ENCODE measurements at regions of chr1 and their contacts with region 1.

Region 1: GRCh38 chr1:48524892-48525467 is 53.0 kb upstream of the SPATA6 start:
- DNase-seq: no peak
- H3K4me3 ChIP-seq: no peak overlapping the region
- H3K27ac ChIP-seq: no peak overlapping the region
- H3K4me1 ChIP-seq: peaks cover 0 to 19% (median 5%) of the 10 kb centered on the region in 4 donors
- H3K27me3 ChIP-seq: no peaks in the 10 kb centered on the region
- CTCF ChIP-seq: no peak
- EP300 ChIP-seq: no peak
- POLR2A ChIP-seq: no peak

Region 2: DNA sequence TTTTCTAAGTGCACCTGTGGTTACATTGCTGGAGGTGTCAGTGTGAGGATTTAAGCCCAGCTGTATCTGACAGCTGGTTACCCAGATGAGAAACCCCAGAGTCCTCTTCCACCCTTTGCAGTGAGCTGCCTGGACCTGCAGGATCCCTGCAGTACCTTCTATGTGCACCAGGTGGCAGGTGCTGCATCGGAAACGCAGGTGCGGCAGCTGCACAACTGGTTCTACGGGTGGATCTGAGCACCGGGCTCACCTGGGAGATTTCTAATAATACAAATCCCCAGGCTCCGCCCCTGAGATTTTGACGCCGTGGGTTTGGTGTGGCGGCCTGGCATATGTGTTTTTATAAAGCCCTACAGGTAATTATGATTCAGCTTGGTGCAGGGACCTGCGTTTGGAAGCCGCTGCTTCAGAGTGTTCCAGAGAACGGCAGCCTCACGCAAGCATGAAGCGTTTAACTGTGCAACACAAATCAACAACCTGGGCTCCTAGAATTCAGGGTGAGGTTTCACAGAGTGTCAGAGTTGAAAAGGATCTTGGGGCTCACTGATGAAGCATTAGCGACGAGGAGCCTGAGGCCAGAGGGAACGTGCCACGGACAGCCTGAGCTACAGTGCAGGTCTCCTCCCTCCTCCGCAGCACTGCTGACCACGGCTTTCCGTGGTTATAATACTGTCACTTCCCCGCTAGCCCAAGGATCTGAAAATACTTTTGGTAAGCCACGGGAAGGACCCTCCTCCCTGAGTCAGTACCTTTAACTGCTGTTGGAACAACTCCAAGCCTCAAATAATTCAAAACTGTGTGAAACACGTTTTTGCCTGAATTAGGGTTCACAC is 431.1 kb before region 1 on chr1:
- in situ Hi-C with region 1: loop called in 1 of 4 experiments (anchors 25 kb)
- intact Hi-C with region 1: no loop called
- DNase-seq: peak; percentile 90
- H3K4me3 ChIP-seq: peak overlapping the region in 1 of 4 donors; percentile 12
- H3K27ac ChIP-seq: no peak overlapping the region
- H3K4me1 ChIP-seq: peaks cover 0 to 8% (median 2%) of the 10 kb centered on the region in 4 donors
- H3K27me3 ChIP-seq: peaks cover 23% of the 10 kb centered on the region
- CTCF ChIP-seq: peak; percentile 66 to 88 (median 84)
- EP300 ChIP-seq: no peak
- POLR2A ChIP-seq: no peak

Region 3: GRCh38 chr1:48697066-48697707 is 172.2 kb after region 1 on chr1:
- in situ Hi-C with region 1: no loop called
- intact Hi-C with region 1: no loop called
- DNase-seq: peak; percentile 63
- H3K4me3 ChIP-seq: no peak overlapping the region
- H3K27ac ChIP-seq: no peak overlapping the region
- H3K4me1 ChIP-seq: no peaks in the 10 kb centered on the region
- H3K27me3 ChIP-seq: no peaks in the 10 kb centered on the region
- CTCF ChIP-seq: peak; percentile 65 to 93 (median 90)
- EP300 ChIP-seq: no peak
- POLR2A ChIP-seq: no peak